ENCODE measurements at regions of chr7 and their contacts with region 1.

Region 1: GRCh38 chr7:8125680-8126444 is 136.1 kb downstream of the ICA1 start:
- DNase-seq: peak; percentile 91
- H3K4me3 Mint-ChIP-seq: peak overlapping the region; percentile 76
- H3K27ac Mint-ChIP-seq: peak overlapping the region; percentile 98
- H3K4me1 Mint-ChIP-seq: peaks cover 67% of the 10 kb centered on the region
- H3K27me3 Mint-ChIP-seq: no peaks in the 10 kb centered on the region

Region 2: DNA sequence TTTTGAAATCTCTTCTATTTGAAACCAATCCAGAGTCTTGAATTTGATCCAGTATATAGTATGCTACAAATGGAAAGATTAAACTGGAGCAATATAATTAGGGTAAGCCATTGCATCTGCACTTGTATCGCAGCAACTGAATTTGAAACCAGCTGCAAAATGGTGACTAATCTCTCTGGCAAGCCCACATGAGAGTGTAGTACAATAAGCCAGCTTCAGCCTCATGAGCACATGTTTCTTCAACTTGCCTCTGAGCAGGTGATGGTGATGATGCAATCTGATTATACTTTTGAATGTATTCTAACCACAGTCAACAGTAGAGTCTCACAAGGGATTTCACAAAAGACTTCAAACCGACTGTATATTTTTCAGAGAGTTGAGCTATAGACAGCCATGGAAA is 406.6 kb before region 1 on chr7:
- intact Hi-C with region 1: loop called (anchors 1 kb)
- DNase-seq: peak; percentile 84
- H3K4me3 Mint-ChIP-seq: peak overlapping the region; percentile 47
- H3K27ac Mint-ChIP-seq: peak overlapping the region; percentile 73
- H3K4me1 Mint-ChIP-seq: peaks cover 17% of the 10 kb centered on the region
- H3K27me3 Mint-ChIP-seq: no peaks in the 10 kb centered on the region

Region 3: DNA sequence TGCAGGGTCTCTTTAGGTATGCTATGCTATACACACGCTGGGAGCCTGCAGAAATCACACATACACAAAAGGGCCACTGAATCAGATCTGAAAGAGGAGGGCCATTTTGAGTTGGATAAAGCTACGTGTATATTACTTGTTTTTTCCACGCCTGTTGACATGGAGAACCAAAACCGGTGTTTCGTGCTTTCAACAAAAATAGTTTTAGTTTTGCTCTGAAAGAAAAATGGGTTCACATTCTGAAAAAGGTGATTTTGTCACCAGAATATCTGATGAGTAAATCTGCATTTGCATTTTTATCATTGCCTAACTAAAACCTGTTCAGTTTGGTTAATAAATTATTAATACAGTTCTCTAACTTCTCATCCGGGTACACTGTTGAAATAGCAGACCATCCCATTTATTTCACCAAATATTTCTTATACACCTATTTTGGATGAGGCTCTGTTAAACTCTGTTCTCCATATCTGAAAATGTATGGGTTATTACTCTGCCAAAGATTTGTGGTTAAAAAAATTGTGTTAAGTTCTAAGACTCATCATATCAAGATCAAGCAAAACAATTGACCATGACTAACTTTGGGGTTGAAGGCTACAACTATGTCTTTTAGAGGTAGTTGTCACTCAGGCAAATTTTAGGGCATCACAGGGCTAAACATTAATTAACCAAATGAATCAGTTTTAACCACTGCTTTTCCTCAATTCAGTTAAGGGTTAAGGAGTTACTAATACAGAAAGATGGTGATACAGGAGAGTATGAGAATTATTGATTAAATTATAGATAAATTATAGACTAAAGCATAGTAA is 306.2 kb before region 1 on chr7:
- intact Hi-C with region 1: no loop called
- DNase-seq: no peak
- H3K4me3 Mint-ChIP-seq: no peak overlapping the region
- H3K27ac Mint-ChIP-seq: no peak overlapping the region
- H3K4me1 Mint-ChIP-seq: peaks cover 24% of the 10 kb centered on the region
- H3K27me3 Mint-ChIP-seq: no peaks in the 10 kb centered on the region

Region 4: DNA sequence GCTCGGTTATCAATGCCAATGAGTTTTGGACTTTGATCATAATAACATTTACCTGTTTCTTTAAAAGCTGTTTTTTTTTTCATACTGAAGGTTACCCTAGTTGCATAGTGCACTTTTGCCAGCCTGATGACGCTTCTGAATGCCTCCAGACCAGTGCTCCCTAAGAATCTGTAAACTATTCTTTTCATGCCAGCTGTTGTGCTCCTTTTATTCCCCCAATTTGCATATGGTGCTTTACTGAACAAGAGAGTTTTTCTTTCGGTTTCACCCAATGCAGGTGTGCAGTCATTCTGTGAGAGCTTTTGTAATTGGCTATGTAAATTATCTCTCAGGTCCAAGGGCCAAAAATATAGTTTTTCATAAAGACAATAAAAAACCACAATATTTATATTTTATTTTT is 205.4 kb before region 1 on chr7:
- intact Hi-C with region 1: loop called (anchors 5 kb)
- DNase-seq: peak; percentile 73
- H3K4me3 Mint-ChIP-seq: peak overlapping the region; percentile 0
- H3K27ac Mint-ChIP-seq: no peak overlapping the region
- H3K4me1 Mint-ChIP-seq: peaks cover 30% of the 10 kb centered on the region
- H3K27me3 Mint-ChIP-seq: no peaks in the 10 kb centered on the region

Region 5: GRCh38 chr7:8115547-8116402 is 10.1 kb before region 1 on chr7:
- intact Hi-C with region 1: loop called (anchors 1 kb)
- DNase-seq: no peak
- H3K4me3 Mint-ChIP-seq: no peak overlapping the region
- H3K27ac Mint-ChIP-seq: peak overlapping the region; percentile 27
- H3K4me1 Mint-ChIP-seq: peaks cover 45% of the 10 kb centered on the region
- H3K27me3 Mint-ChIP-seq: no peaks in the 10 kb centered on the region

Region 6: DNA sequence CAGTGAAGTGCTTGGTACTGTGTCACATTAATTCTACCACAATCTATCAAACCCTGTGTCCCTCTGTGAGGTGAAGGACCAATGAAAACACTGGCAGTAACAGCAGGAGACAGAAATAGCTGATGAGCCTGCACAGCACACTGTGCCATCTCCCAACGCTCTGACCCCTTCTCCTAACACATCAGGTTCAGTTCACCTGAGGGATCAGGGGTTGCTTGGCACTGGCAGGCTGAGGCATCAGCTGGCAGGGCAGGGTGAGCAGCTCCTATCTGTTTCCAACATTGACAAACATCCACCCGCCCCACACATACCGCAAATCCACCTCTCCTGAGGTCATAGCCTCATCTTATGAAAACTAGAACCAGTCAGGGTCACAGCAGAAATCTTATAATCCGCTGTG is 15.2 kb after region 1 on chr7:
- intact Hi-C with region 1: no loop called
- DNase-seq: no peak
- H3K4me3 Mint-ChIP-seq: no peak overlapping the region
- H3K27ac Mint-ChIP-seq: no peak overlapping the region
- H3K4me1 Mint-ChIP-seq: peaks cover 12% of the 10 kb centered on the region
- H3K27me3 Mint-ChIP-seq: no peaks in the 10 kb centered on the region

Region 7: GRCh38 chr7:8197994-8198698 is 72.3 kb after region 1 on chr7:
- intact Hi-C with region 1: loop called (anchors 5 kb)
- DNase-seq: peak; percentile 84
- H3K4me3 Mint-ChIP-seq: peak overlapping the region; percentile 16
- H3K27ac Mint-ChIP-seq: peak overlapping the region; percentile 5
- H3K4me1 Mint-ChIP-seq: peaks cover 43% of the 10 kb centered on the region
- H3K27me3 Mint-ChIP-seq: peaks cover 12% of the 10 kb centered on the region

Measured in activated CD4-positive, alpha-beta T cell treated with anti-CD3 and anti-CD28 coated beads, Interleukin-2, amount 10 ng/mL, durations not matched to agents 24 days and 14 days (primary cell).